ENCODE measurements at regions of chr7 and their contacts with region 1.

Region 1: DNA sequence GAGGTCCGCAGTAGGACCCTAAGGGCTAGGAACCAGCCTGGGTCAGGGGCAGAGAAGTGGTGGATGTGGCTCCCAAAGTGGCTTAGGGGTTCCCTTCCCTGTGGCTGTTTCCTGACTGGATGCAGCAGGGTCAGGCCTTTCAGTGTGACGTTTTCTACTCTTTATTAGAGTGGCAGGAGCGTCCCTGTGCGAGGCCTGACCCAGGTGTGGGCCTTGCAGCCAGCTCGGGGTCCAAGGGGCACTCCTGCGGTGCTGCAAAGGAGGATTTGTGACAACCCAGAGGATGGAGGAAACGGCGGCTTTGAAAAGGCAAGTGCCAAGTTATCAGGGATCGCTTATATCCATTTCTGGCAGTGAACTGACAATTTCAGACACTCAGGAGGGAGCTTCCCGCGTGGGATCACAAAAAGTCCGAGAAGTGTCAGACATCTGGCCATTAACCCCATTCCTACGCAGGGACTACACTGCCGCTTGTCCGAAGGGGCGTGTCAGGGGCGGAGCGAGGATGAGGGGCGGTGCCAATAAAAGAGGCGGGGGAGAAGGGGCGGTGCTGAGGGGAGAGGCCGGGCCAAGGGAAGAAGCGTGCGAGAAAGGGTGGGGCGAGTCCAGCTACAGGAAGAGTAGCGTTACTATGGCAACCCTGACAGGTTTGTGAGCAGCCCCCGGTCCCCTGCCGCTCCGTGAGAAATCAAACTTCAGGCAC is 98.8 kb upstream of the ZNF722 start:
- DNase-seq: peak; percentile 89 to 94 (median 93)
- ATAC-seq: peak; percentile 95 to 97
- H3K4me3 ChIP-seq: peak overlapping the region; percentile 66
- H3K27ac ChIP-seq: peak overlapping the region; percentile 30
- H3K4me1 ChIP-seq: no peaks in the 10 kb centered on the region
- H3K27me3 ChIP-seq: no peaks in the 10 kb centered on the region

Region 2: GRCh38 chr7:63876707-63877322 is 23.0 kb before region 1 on chr7:
- intact Hi-C with region 1: no loop called
- DNase-seq: no peak
- ATAC-seq: no peak
- H3K4me3 ChIP-seq: no peak overlapping the region
- H3K27ac ChIP-seq: no peak overlapping the region
- H3K4me1 ChIP-seq: no peaks in the 10 kb centered on the region
- H3K27me3 ChIP-seq: no peaks in the 10 kb centered on the region

Region 3: DNA sequence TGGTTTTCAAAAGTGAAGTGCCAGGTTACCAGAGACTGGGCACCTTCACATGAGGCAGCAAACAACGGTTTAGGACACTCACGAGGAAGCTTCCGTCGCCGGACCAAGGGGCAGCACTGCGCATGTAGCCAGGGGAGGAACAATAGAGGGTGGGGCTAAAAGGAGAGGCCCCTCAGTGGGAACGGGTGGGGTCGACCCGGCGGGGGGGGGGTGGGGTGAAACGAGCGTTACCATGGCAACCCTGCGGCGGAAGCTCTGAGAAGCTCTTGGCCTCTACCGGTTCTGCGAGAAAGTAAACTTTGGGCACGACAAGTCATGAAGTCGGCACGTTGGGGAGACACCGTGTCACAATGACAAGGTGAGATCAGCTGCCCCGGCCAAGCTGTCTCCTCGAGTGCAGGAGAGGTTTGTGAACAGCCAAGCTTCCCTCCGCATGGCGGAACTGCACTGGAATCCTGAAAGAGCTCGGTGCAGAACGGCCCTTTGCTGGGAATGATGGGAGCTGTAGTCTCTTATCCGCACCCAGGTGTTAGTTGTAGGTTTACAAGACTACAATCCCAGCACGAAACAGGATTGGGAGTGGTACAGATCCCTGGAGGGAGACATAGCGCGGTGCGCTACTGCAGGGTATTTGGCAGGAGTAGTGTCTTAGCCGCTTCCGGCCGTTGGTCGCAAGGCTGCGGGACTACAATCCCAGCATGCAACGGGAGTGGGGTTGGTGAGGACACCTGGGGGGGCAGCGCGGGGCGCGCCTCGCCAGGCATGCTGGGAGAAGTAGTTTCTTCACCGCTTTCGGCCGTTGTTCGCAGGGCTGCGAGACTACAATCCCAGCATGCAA is 26.0 kb after region 1 on chr7:
- intact Hi-C with region 1: loop called in 1 of 4 experiments (anchors 2 kb)
- DNase-seq: peak; percentile 96 to 98 (median 97)
- ATAC-seq: peak; percentile 99
- H3K4me3 ChIP-seq: peak overlapping the region; percentile 56
- H3K27ac ChIP-seq: peak overlapping the region; percentile 73
- H3K4me1 ChIP-seq: no peaks in the 10 kb centered on the region
- H3K27me3 ChIP-seq: no peaks in the 10 kb centered on the region